ENCODE measurements at regions of chr15 and their contacts with region 1.

Region 1: DNA sequence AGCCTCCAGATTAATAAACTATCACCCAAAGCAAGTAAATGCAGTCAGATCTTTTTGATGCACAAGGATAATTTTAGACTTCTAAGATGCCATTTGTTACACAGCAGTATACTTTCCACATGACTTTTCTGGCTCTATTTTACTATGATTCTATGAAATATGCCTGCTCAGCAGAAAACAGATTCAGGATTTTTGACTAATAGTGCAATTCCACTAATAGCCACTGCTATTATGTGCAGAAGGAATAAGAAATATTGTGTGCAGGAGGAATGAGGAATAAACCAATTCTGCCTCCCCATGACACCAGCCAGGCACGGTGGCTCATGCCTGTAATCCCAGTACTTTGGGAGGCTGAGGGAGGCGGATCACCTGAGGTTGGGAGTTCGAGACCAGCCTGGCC is 11.5 kb upstream of the SPPL2A start:
- DNase-seq: no peak
- H3K4me3 ChIP-seq: no peak overlapping the region
- H3K27ac ChIP-seq: no peak overlapping the region
- H3K4me1 ChIP-seq: no peaks in the 10 kb centered on the region
- H3K27me3 ChIP-seq: no peaks in the 10 kb centered on the region
- CTCF ChIP-seq: no peak; the same call in 1 of the 2 replicates

Region 2: DNA sequence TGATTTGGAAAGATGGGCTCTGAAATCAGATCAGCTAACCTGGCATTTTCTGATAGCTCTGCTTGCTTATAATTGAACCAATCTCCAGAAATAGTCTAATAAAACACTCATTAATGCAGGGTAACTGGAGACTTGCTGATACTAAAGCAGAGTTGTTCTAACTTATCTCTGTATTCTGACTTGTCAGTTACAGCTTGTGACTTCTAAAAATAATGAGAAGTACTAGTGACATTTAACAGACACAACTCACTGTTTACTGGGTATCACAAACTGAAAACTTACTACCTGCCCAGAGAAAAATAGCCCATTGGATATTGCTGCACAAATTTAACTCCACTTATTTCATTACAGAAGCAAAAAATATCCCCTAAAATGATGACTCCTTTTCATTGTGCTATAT is 66.5 kb before region 1 on chr15:
- CTCF ChIA-PET with region 1: interaction called, 13 read pairs
- POLR2A ChIA-PET with region 1: no interaction called
- intact Hi-C with region 1: no loop called
- DNase-seq: no peak
- H3K4me3 ChIP-seq: no peak overlapping the region
- H3K27ac ChIP-seq: no peak overlapping the region
- H3K4me1 ChIP-seq: no peaks in the 10 kb centered on the region
- H3K27me3 ChIP-seq: no peaks in the 10 kb centered on the region
- CTCF ChIP-seq: no peak

Measured in PC-9 (cell line).